Activated CD4-positive, alpha-beta T cell treated with anti-CD3 and anti-CD28 coated beads for 36 hours (primary cell): ENCODE measurements at regions of chr7 and their contacts with region 1.

Region 1: GRCh38 chr7:30284298-30285066 is at the start of gene ZNRF2:
- DNase-seq: peak; percentile 99
- ATAC-seq: peak; percentile 93
- H3K4me3 Mint-ChIP-seq: peak within 1 kb of the TSS; percentile 74
- H3K27ac Mint-ChIP-seq: peak within 1 kb of the TSS; percentile 82
- H3K4me1 Mint-ChIP-seq: peaks cover 40% of the 10 kb centered on the region
- H3K27me3 Mint-ChIP-seq: no peaks in the 10 kb centered on the region
- total RNA-seq, gene ZNRF2: 8.1 to 8.8 TPM

Region 2: GRCh38 chr7:29684787-29685650 is 599.5 kb before region 1 on chr7:
- CTCF ChIA-PET with region 1: no interaction called
- POLR2A ChIA-PET with region 1: no interaction called
- intact Hi-C with region 1: loop called in 1 of 2 experiments (anchors 10 kb)
- DNase-seq: peak; percentile 71
- ATAC-seq: peak; percentile 80
- H3K4me3 Mint-ChIP-seq: peak overlapping the region; percentile 76
- H3K27ac Mint-ChIP-seq: no peak overlapping the region
- H3K4me1 Mint-ChIP-seq: peaks cover 6% of the 10 kb centered on the region
- H3K27me3 Mint-ChIP-seq: peaks cover 9% of the 10 kb centered on the region

Region 3: DNA sequence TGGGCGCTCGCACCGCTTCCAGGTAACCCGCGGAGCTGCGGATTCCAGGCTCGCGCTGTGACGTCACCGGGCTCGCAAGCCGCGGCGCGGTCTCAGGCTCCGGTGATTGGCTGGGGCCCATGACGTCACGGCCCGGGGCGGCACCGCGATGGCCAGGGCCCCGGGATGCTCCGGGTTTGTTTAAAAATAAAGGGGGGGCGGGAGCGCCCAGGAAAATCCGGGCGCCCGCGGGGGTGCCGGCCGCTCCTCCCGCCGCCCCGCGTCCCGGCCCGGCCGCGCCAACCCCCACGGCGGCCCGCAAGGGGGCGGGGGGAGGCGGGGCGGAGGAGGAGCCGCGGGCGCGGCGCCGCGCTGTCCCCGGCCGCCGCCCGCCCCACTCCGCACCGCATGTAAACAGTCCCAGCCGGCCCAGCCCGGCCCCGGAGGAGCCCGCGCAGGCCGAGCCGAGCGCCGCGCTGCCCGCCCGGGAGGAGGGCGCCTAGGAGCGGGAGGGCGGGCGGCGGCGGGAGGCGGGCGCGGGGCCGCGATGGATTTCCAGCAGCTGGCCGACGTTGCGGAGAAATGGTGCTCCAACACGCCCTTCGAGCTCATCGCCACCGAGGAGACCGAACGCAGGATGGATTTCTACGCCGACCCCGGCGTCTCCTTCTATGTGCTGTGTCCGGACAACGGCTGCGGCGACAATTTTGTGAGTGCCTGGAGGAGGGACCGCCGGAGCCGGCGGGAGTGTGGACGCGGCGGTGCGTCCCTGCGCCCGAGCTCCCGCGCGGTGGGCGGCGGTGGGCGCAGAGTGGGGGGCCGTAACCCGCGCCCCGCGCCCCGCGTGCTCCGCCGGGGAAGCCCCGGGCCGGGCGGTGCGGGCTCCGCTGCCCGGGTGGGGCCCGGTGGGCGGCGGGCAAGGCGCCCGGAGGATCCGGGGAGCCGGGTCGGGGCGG is 149.6 kb before region 1 on chr7 and contains the start of gene MTURN:
- CTCF ChIA-PET with region 1: no interaction called
- POLR2A ChIA-PET with region 1: no interaction called
- intact Hi-C with region 1: loop called (anchors 1 to 10 kb)
- DNase-seq: peak; percentile 92
- ATAC-seq: peak; percentile 83
- H3K4me3 Mint-ChIP-seq: peak within 1 kb of the TSS; percentile 81
- H3K27ac Mint-ChIP-seq: peak within 1 kb of the TSS; percentile 84
- H3K4me1 Mint-ChIP-seq: peaks cover 4% of the 10 kb centered on the region
- H3K27me3 Mint-ChIP-seq: no peaks in the 10 kb centered on the region
- total RNA-seq, gene MTURN: 4.2 TPM

Region 4: GRCh38 chr7:30308389-30308788 is 23.9 kb after region 1 on chr7:
- CTCF ChIA-PET with region 1: interaction called, 3 read pairs
- POLR2A ChIA-PET with region 1: no interaction called
- intact Hi-C with region 1: loop called in 1 of 2 experiments (anchors 2 kb)
- DNase-seq: peak; percentile 24
- ATAC-seq: peak; percentile 89
- H3K4me3 Mint-ChIP-seq: no peak overlapping the region
- H3K27ac Mint-ChIP-seq: peak overlapping the region; percentile 19
- H3K4me1 Mint-ChIP-seq: peaks cover 74% of the 10 kb centered on the region
- H3K27me3 Mint-ChIP-seq: no peaks in the 10 kb centered on the region

Region 5: DNA sequence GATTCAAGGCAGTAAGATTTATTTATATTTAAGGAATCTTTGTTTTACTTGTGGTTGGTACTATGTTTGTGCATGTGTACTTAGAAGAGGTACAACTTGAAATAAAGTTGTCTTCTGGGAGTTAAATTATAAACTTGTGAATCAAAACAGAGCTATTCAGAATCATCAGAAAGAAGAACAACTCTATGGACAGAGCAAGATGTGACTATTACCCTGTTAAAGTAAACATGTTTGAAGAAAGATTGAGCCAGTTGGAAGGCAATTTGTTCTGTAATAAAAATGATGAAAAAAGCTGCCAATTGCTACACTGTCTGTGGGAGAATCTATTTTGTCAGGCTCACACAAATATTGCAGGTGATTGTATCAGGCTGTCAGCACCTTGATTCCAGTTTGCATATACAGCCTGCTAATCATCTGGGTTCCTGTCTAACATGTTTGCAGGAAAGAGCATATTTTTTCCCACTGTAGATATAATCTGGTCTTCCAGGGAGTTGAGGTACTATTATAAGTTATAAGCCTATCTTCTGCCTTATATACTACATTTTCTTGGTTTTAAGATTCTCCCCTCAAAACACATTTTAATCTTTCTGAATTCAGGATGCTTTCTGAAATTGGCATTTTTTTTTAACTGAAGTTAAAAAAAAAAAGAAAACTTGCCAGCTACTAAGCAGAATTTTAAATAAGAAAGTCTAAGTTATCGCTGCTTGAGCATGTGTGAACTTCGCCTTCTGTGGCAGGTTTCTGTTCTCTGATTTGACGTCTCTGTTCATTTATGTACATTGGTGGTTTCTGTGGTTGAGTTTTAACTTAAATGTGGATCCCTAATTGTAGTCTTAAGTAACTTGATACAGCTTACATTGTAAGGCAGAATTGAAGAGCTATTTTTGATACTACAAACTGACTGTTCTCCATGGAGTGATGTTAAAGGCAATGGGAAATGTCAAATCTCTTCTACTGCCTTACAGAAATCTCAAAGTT is 45.9 kb after region 1 on chr7:
- CTCF ChIA-PET with region 1: no interaction called
- POLR2A ChIA-PET with region 1: no interaction called
- intact Hi-C with region 1: loop called in 1 of 2 experiments (anchors 1 kb)
- DNase-seq: peak; percentile 39
- ATAC-seq: peak; percentile 87
- H3K4me3 Mint-ChIP-seq: peak overlapping the region; percentile 42
- H3K27ac Mint-ChIP-seq: peak overlapping the region; percentile 77
- H3K4me1 Mint-ChIP-seq: peaks cover 51% of the 10 kb centered on the region
- H3K27me3 Mint-ChIP-seq: no peaks in the 10 kb centered on the region

Region 6: GRCh38 chr7:30478349-30479201 is 194.1 kb after region 1 on chr7 and contains the start of gene NOD1:
- CTCF ChIA-PET with region 1: interaction called, 4 read pairs
- POLR2A ChIA-PET with region 1: interaction called, 10 read pairs
- intact Hi-C with region 1: loop called (anchors 1 to 2 kb)
- DNase-seq: peak; percentile 86
- ATAC-seq: peak; percentile 89
- H3K4me3 Mint-ChIP-seq: peak within 1 kb of the TSS; percentile 88
- H3K27ac Mint-ChIP-seq: peak within 1 kb of the TSS; percentile 90
- H3K4me1 Mint-ChIP-seq: peaks cover 50% of the 10 kb centered on the region
- H3K27me3 Mint-ChIP-seq: no peaks in the 10 kb centered on the region
- total RNA-seq, gene NOD1: 10.8 to 11.0 TPM

Region 7: DNA sequence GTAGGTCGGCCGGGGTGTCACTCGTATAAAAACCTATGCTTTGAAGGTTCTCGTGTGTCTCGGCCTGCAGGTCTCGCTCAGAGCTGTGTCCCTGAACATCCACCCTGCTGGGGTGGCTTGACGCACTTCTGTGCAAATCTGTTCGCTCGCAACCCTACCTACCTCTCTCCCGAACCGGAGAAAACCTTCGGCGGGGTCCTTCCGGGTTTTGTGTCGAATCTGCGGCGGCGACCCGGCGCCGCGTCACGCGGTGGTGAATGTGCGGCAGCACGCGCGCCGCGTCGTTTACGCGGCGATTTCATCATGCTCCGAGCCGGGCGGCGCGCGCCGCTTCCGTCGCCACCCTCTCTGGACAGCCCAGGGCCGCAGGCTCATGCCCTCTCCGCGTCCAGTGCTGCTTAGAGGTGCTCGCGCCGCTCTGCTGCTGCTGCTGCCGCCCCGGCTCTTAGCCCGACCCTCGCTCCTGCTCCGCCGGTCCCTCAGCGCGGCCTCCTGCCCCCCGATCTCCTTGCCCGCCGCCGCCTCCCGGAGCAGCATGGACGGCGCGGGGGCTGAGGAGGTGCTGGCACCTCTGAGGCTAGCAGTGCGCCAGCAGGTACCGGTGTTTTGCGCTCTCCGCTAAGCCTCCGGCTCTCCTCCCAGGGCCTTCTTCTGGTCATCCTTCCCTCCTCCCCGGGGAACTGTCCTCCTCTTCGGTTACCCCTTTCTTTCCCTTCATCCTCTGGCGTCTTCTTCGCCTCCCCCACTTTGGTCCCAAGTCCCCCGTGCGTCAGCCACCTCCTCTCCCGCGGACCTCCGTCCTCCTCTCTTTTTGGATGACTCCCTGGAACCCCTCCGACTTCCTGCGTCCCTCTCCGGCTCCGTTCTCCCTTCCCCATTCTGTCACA is 310.3 kb after region 1 on chr7 and contains the start of gene GARS1:
- CTCF ChIA-PET with region 1: no interaction called
- POLR2A ChIA-PET with region 1: no interaction called
- intact Hi-C with region 1: loop called (anchors 1 to 10 kb)
- DNase-seq: peak; percentile 94
- ATAC-seq: peak; percentile 84
- H3K4me3 Mint-ChIP-seq: peak within 1 kb of the TSS; percentile 100
- H3K27ac Mint-ChIP-seq: peak within 1 kb of the TSS; percentile 100
- H3K4me1 Mint-ChIP-seq: peaks cover 51% of the 10 kb centered on the region
- H3K27me3 Mint-ChIP-seq: no peaks in the 10 kb centered on the region
- total RNA-seq, gene GARS1: 391 to 439 TPM